ENCODE measurements at regions of chr7 and their contacts with region 1.

Region 1: GRCh38 chr7:25093268-25093826 is 31.7 kb downstream of the CYCS start:
- H3K4me3 ChIP-seq: no peak overlapping the region
- H3K27ac ChIP-seq: no peak overlapping the region
- H3K4me1 ChIP-seq: no peaks in the 10 kb centered on the region
- CTCF ChIP-seq: peak; percentile 19; the same call in 1 of the 2 replicates

Region 2: DNA sequence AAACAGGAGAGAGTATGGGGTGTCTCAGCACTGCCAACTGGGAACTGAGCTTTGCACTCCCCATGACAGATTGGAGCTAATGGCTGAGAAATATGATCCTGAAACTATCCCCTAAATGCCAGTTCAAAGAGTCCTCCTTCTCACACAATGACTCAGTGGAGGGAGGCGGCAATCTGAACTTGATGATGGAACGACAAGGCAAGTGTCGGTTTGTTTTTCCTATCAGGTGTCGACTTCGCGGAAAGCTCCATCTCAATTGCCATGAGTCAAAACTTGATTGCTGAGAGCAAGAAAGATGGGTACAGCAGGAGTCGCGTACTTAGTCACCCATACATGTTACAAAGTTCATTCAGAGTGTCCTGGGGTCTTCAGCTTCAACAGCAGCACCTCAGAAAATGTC is 756.9 kb before region 1 on chr7:
- CTCF ChIA-PET with region 1: no interaction called
- POLR2A ChIA-PET with region 1: no interaction called
- H3K4me3 ChIP-seq: no peak overlapping the region
- H3K27ac ChIP-seq: no peak overlapping the region
- H3K4me1 ChIP-seq: no peaks in the 10 kb centered on the region
- CTCF ChIP-seq: no peak

Region 3: DNA sequence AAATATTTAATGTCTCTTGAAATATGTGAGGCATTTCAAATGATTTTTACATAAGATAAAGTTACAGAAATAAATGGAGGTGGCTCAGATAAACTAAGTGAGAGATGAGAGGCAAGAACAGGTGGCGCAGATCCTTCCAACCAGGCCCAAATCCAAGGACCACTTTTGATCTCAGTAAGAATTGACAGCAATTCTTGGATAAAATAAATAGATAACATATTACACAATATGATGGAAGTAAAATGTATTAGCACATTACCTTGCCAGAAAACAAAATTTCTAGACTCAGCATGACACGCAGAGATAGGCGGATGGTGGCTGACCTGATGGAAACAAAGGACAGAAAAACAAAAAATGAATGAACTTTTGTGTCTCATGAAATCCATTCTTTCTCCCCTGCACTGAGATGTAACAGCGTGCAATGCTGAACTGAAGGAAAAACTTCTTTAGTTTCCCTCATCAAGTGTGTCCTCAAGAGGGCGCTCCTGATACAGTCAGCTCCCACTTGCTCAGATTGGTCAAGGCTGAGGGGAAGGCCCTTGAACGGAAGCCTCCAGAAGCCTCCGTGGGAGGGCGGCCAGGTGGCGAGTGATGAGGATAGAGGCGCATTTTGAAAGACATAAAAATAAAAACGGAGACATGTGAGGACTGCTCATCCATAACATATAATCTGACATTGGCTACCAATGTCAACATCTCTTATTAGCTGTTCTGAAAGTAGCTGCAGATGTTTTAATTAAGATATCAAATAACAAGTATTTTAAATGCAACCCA is 273.2 kb before region 1 on chr7:
- CTCF ChIA-PET with region 1: interaction called, 142 read pairs
- POLR2A ChIA-PET with region 1: no interaction called
- H3K4me3 ChIP-seq: no peak overlapping the region
- H3K27ac ChIP-seq: no peak overlapping the region
- H3K4me1 ChIP-seq: 0 out of 2 replicates have a peak, but pooled peaks cover 4% of the 10 kb centered on the region
- CTCF ChIP-seq: peak; percentile 48; the same call in 1 of the 2 replicates

Region 4: DNA sequence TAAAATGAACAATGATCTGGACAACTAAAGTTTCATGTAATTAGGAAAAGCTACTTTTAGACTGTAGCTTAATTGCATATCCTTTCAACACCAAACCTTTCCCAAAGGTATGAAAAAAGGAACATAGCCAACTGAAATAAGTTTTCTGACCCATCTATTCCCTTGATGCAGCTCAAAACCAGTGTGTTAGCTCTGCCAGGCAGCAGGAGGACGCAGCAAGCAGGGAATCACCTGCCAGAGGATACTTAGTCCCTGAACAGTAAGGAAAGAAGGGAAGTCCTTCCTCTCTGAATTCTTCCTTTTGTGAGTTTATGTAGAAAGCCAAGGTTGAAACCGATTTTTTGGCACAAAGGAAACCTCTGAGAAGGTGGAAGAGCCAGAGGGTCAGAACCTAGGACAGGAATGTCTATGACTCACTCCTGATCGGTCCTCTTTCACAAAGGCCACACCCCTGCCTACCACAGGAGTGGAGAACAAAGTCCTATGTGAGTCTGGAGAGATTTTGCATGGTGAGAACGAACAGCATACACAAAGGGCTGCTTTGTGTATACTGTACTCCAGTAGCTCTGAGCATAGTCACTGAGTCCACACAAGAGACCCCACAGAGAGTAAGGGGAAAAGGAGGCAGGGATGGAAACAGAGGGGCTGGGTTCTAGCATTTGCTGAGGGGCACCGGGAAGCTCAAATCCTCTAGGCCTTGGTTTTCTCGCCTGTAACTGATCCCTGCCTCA is 267.3 kb before region 1 on chr7:
- CTCF ChIA-PET with region 1: interaction called, 52 read pairs
- POLR2A ChIA-PET with region 1: no interaction called
- H3K4me3 ChIP-seq: no peak overlapping the region
- H3K27ac ChIP-seq: no peak overlapping the region
- H3K4me1 ChIP-seq: peaks cover 4% of the 10 kb centered on the region; the same call in 1 of the 2 replicates
- CTCF ChIP-seq: no peak

Region 5: GRCh38 chr7:25028370-25029021 is 64.9 kb before region 1 on chr7:
- CTCF ChIA-PET with region 1: interaction called, 12 read pairs
- POLR2A ChIA-PET with region 1: no interaction called
- H3K4me3 ChIP-seq: no peak overlapping the region
- H3K27ac ChIP-seq: peak overlapping the region; percentile 42
- H3K4me1 ChIP-seq: peaks cover 4% of the 10 kb centered on the region; the same call in 1 of the 2 replicates
- CTCF ChIP-seq: no peak

Region 6: DNA sequence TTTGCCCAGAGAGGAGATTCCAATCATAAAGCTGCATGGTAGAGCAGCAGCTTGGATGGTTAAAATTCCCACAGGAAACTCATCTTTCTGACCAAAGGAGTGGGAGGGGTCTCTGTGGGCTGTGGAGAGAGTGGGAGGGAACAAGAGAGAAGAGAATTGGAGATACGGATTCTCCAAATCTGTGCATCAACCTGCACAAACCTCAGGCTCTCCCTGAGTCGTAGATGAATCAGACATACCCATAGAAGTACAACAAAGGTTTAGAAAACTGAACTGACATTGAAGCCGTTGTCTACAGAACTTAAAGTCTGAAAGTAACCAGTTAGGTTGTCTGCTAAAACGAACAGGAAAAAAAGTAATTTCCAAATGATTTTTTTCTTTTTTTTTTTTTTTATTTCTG is 10.1 kb before region 1 on chr7:
- CTCF ChIA-PET with region 1: interaction called, 25 read pairs
- POLR2A ChIA-PET with region 1: no interaction called
- H3K4me3 ChIP-seq: no peak overlapping the region
- H3K27ac ChIP-seq: no peak overlapping the region
- H3K4me1 ChIP-seq: peaks cover 3% of the 10 kb centered on the region; the same call in 1 of the 2 replicates
- CTCF ChIP-seq: no peak

Measured in HEK293 (cell line).